ENCODE measurements at regions of chr4 and their contacts with region 1.

Region 1: GRCh38 chr4:39134683-39135319 is 47.5 kb upstream of the WDR19 start:
- DNase-seq: no peak
- H3K4me3 ChIP-seq: no peak overlapping the region
- H3K27me3 ChIP-seq: no peaks in the 10 kb centered on the region
- CTCF ChIP-seq: no peak

Region 2: GRCh38 chr4:38902221-38902620 is 232.6 kb before region 1 on chr4:
- CTCF ChIA-PET with region 1: interaction called, 11 read pairs
- POLR2A ChIA-PET with region 1: no interaction called
- DNase-seq: no peak
- H3K4me3 ChIP-seq: no peak overlapping the region
- H3K27me3 ChIP-seq: no peaks in the 10 kb centered on the region
- CTCF ChIP-seq: no peak

Region 3: DNA sequence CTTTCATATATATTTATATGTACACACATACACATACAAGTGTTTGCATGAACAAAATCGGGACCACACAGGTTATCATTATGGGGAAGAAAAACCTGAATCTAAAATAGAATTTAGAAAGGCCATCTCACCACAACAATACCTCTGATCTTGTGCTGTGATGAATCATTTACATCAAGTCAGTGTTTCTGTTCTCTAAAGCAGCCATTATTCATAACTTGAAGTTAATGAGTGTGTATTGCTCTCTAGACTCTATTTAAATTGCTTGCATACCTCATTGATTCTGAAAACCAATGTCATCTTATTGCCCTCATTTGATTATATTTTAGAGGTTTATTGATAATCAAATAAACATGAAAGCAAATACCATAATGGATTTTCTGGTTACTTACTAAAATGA is 195.6 kb before region 1 on chr4:
- CTCF ChIA-PET with region 1: interaction called, 10 read pairs
- POLR2A ChIA-PET with region 1: no interaction called
- DNase-seq: no peak
- H3K4me3 ChIP-seq: no peak overlapping the region
- H3K27me3 ChIP-seq: no peaks in the 10 kb centered on the region
- CTCF ChIP-seq: no peak

Region 4: DNA sequence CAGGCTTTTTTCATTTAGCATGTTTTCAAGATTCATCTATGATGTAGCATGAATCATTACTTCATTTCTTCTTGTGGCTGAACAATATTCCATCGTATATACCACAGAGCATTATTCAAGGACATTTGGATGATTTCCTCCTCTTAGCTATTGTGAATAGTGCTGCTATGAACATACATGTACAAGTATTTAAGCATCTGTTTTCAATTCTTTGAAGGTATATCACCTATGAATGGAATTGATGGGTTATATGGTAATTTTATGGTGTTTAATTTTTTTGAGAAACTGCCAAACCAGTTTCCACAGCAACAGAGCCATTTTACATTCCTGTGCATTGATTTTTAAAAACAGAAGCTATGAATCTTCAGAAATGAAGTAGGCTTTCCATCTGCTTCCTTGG is 11.4 kb after region 1 on chr4:
- CTCF ChIA-PET with region 1: interaction called, 27 read pairs
- POLR2A ChIA-PET with region 1: no interaction called
- DNase-seq: no peak
- H3K4me3 ChIP-seq: no peak overlapping the region
- H3K27me3 ChIP-seq: no peaks in the 10 kb centered on the region
- CTCF ChIP-seq: no peak

Region 5: DNA sequence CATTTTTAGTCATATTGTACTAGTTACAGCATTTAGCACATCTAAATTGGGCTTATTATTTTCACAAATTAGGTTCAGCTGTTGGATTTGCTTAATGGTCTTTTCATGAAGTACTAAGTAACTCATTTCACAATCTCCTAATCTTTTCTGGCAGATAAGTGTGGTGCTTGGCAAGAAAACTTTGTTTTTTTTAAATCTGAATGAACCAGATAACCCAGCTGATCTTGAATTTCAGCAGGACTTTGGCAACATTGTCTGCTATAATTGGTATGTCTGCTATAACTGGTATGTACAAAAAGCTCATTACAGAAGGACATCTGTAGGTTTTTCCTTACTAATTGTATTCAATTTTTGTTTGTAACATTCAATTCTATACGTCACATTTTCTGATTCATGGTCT is 70.2 kb after region 1 on chr4:
- CTCF ChIA-PET with region 1: no interaction called
- POLR2A ChIA-PET with region 1: no interaction called
- DNase-seq: no peak
- H3K4me3 ChIP-seq: no peak overlapping the region
- H3K27me3 ChIP-seq: no peaks in the 10 kb centered on the region
- CTCF ChIP-seq: no peak